GM12878 (cell line): ENCODE measurements at regions of chr5 and their contacts with region 1.

Region 1: GRCh38 chr5:34474573-34475021 is 181.5 kb upstream of the RAI14 start:
- DNase-seq: no peak
- ATAC-seq: peak; percentile 76
- H3K4me3 ChIP-seq: no peak overlapping the region
- H3K27ac ChIP-seq: no peak overlapping the region
- H3K4me1 ChIP-seq: no peaks in the 10 kb centered on the region
- H3K27me3 ChIP-seq: peaks cover 0 to 2% of the 10 kb centered on the region in 2 experiments; a peak in 2 of 4 replicates
- CTCF ChIP-seq: peak; percentile 60 to 92 (median 87)
- EP300 ChIP-seq: no peak
- POLR2A ChIP-seq: no peak
- RAD21 ChIP-seq: peak; percentile 90

Region 2: DNA sequence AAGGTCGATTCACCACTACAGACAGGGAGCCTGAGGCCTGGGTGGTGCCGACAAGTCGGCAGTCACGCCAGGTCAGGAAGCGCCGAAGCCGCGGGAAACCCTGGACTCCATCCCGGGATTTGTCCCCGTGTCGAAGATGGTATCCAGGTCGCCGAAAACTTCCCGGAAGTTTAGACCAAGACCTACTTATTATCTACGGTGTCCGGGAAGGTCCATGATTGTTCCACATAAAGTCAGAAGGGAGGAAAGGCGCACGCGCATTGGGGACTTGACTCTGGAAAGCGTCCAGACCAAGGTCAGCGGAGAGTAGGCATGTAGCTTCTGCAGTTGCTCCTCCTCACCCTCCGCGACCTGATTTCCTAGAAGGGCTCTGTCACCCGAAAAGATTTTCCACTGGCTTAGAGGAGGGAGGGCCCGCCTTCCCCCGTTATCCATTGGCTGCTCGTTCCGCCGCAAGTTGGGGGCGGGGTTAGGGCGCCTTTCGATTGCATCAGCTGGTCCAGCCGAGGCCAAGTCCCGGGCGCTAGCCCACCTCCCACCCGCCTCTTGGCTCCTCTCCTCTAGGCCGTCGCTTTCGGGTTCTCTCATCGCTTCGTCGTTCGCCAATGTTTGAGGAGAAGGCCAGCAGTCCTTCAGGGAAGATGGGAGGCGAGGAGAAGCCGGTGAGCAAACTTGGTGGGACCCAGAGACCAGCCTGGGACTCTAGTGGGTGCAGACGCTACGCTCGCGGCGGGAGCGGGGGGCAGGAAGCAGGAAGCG is 1033.9 kb before region 1 on chr5 and contains the start of gene TARS1:
- CTCF ChIA-PET with region 1: no interaction called
- POLR2A ChIA-PET with region 1: no interaction called
- RAD21 ChIA-PET with region 1: no interaction called
- SMC1A ChIA-PET with region 1: no interaction called
- in situ Hi-C with region 1: loop called (anchors 25 kb)
- intact Hi-C with region 1: loop called (anchors 5 kb)
- DNase-seq: peak; percentile 100
- ATAC-seq: peak; percentile 94
- H3K4me3 ChIP-seq: peak within 1 kb of the TSS; percentile 96
- H3K27ac ChIP-seq: peak within 1 kb of the TSS; percentile 92
- H3K4me1 ChIP-seq: no peaks in the 10 kb centered on the region
- H3K27me3 ChIP-seq: no peaks in the 10 kb centered on the region
- CTCF ChIP-seq: no peak
- EP300 ChIP-seq: 0 out of 4 replicates have a peak, but pooled peaks of 1 of the 2 experiments have one; percentile 21
- POLR2A ChIP-seq: peak; percentile 95
- RAD21 ChIP-seq: no peak
- polyA plus RNA-seq, gene TARS1: 163 to 244 TPM

Region 3: DNA sequence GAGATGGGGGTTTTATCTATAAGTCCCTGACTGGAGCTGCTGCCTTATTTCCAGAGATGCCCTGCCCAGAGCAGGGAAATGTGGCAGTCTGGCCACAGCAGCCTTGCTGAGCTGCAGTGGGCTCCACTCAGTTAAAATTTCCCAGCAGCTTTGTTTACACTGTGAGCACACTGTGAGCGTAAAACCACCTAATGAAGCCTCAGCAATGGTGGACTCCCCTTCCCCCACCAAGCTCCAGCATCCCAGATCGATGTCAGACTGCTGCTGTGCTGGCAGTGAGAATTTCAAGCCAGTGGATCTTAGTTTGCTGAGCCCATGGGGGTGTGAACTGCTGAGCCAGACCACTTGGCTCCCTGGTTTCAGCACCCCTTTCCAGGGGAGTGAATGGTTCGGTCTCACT is 27.2 kb before region 1 on chr5:
- CTCF ChIA-PET with region 1: no interaction called
- POLR2A ChIA-PET with region 1: no interaction called
- RAD21 ChIA-PET with region 1: no interaction called
- SMC1A ChIA-PET with region 1: no interaction called
- in situ Hi-C with region 1: no loop called
- intact Hi-C with region 1: no loop called
- DNase-seq: no peak
- ATAC-seq: no peak
- H3K4me3 ChIP-seq: no peak overlapping the region
- H3K27ac ChIP-seq: no peak overlapping the region
- H3K4me1 ChIP-seq: no peaks in the 10 kb centered on the region
- H3K27me3 ChIP-seq: no peaks in the 10 kb centered on the region
- CTCF ChIP-seq: no peak
- EP300 ChIP-seq: no peak
- POLR2A ChIP-seq: no peak
- RAD21 ChIP-seq: no peak

Region 4: DNA sequence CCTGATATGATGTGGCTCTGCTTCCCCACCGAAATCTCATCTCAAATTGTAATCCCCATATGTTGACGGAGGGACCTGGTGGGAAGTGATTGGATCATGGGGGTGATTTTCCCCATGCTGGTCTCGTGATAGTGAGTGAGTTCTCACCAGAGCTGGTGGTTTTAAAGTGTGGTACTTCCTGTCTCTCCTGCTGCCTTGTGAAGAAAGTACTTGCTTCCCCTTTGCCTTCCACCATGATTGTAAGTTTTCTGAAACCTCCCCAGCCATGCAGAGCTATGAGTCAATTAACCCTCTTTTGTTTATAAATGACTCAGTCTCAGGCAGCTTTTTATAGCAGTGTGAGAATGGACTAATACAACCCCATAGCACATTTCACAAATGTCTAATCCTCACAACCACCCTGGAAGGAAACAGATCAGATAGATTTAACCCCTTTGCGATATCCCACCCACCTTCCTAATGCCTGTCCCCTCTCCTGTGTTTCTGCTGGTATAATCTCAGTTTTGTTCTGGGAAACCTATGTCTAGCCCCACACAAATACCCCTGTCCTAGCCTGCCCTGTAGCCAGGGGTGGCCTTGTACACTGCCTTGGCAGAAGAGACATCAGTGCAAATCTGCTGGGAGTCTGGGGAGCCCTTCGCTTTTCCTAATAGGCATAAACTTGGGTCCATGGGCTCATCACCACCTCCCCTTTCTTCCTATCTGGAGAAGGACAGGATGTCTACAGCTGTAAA is 24.6 kb after region 1 on chr5:
- CTCF ChIA-PET with region 1: interaction called, 15 read pairs
- POLR2A ChIA-PET with region 1: no interaction called
- RAD21 ChIA-PET with region 1: no interaction called
- SMC1A ChIA-PET with region 1: interaction called, 4 read pairs
- in situ Hi-C with region 1: no loop called
- intact Hi-C with region 1: no loop called
- DNase-seq: peak; percentile 81
- ATAC-seq: peak; percentile 95
- H3K4me3 ChIP-seq: no peak overlapping the region
- H3K27ac ChIP-seq: peak overlapping the region; percentile 91
- H3K4me1 ChIP-seq: peaks cover 58% of the 10 kb centered on the region
- H3K27me3 ChIP-seq: no peaks in the 10 kb centered on the region
- CTCF ChIP-seq: no peak
- EP300 ChIP-seq: peak; percentile 31 to 74; a peak in 2 of 4 replicates
- POLR2A ChIP-seq: no peak
- RAD21 ChIP-seq: no peak

Region 5: GRCh38 chr5:34533582-34534522 is 59.3 kb after region 1 on chr5:
- CTCF ChIA-PET with region 1: interaction called, 20 read pairs
- POLR2A ChIA-PET with region 1: no interaction called
- RAD21 ChIA-PET with region 1: interaction called, 8 read pairs
- SMC1A ChIA-PET with region 1: interaction called, 18 read pairs
- in situ Hi-C with region 1: no loop called
- intact Hi-C with region 1: no loop called
- DNase-seq: no peak
- ATAC-seq: peak; percentile 74
- H3K4me3 ChIP-seq: no peak overlapping the region
- H3K27ac ChIP-seq: peak overlapping the region; percentile 42
- H3K4me1 ChIP-seq: peaks cover 21% of the 10 kb centered on the region
- H3K27me3 ChIP-seq: no peaks in the 10 kb centered on the region; a peak in 1 of 4 replicates
- CTCF ChIP-seq: no peak
- EP300 ChIP-seq: no peak
- POLR2A ChIP-seq: no peak
- RAD21 ChIP-seq: no peak

Region 6: GRCh38 chr5:34898258-34898895 is 423.8 kb after region 1 on chr5:
- CTCF ChIA-PET with region 1: interaction called, 44 read pairs
- POLR2A ChIA-PET with region 1: no interaction called
- RAD21 ChIA-PET with region 1: interaction called, 3 read pairs
- SMC1A ChIA-PET with region 1: interaction called, 7 read pairs
- in situ Hi-C with region 1: loop called (anchors 25 kb)
- intact Hi-C with region 1: loop called (anchors 1 kb)
- DNase-seq: no peak
- ATAC-seq: peak; percentile 94
- H3K4me3 ChIP-seq: no peak overlapping the region
- H3K27ac ChIP-seq: no peak overlapping the region
- H3K4me1 ChIP-seq: no peaks in the 10 kb centered on the region
- H3K27me3 ChIP-seq: no peaks in the 10 kb centered on the region
- CTCF ChIP-seq: peak; percentile 77 to 82 (median 79)
- EP300 ChIP-seq: no peak
- POLR2A ChIP-seq: no peak
- RAD21 ChIP-seq: peak; percentile 90

Region 7: DNA sequence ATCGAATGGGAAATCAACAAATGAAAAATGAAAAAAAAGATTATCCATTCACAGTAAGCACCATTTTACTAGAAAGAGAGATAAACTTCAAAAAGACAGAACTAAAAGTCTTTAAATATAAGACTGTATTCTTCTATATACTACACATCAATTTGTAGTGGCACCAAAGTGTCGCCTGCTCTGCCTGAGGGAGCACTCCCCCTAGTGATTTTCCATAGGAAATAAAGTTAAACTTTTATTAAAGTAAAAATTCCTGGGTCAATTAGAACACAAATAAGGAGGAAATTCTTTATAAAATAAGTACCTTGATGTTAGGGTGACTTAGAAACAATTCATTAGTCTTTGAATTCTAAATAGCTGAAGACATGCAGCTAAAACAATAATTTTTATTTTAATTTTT is 431.0 kb after region 1 on chr5:
- CTCF ChIA-PET with region 1: interaction called, 13 read pairs
- POLR2A ChIA-PET with region 1: no interaction called
- RAD21 ChIA-PET with region 1: no interaction called
- SMC1A ChIA-PET with region 1: interaction called, 3 read pairs
- in situ Hi-C with region 1: loop called (anchors 25 kb)
- intact Hi-C with region 1: no loop called
- DNase-seq: no peak
- ATAC-seq: no peak
- H3K4me3 ChIP-seq: no peak overlapping the region
- H3K27ac ChIP-seq: no peak overlapping the region
- H3K4me1 ChIP-seq: no peaks in the 10 kb centered on the region
- H3K27me3 ChIP-seq: no peaks in the 10 kb centered on the region
- CTCF ChIP-seq: no peak; a peak in 1 of 6 replicates
- EP300 ChIP-seq: no peak
- POLR2A ChIP-seq: no peak
- RAD21 ChIP-seq: no peak